PC-3 (cell line): ENCODE measurements at regions of chr15 and their contacts with region 1.

Region 1: DNA sequence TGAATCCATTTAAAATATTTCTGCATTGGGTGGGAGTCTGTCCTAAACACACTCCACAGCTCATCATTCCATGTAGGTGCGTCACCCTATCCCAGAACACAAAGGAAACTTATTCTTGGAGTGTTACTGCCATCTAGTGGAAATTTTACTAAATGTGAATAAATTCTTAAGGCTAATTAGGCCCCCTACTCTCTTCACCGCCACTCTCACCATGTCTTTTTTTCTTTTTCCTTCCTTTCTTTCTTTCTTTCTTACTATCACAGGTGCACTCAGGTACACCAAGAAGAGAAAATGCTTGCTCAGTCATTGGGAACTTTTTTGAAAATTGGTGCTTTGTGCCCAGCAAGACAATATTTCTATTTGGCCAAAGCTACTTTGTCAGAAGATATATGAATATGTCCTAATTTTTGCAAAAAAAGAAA is 26.4 kb upstream of the ATP8B4 start:
- DNase-seq: peak; percentile 90
- ATAC-seq: peak; percentile 89
- H3K4me3 ChIP-seq: no peak overlapping the region
- H3K27ac ChIP-seq: no peak overlapping the region
- H3K4me1 ChIP-seq: peaks cover 21% of the 10 kb centered on the region; the same call in 1 of the 2 replicates
- H3K27me3 ChIP-seq: no peaks in the 10 kb centered on the region
- CTCF ChIP-seq: peak; percentile 69

Region 2: GRCh38 chr15:48963524-48964113 is 1181.8 kb before region 1 on chr15 and contains the start of gene SHC4:
- CTCF ChIA-PET with region 1: no interaction called
- POLR2A ChIA-PET with region 1: no interaction called
- intact Hi-C with region 1: loop called (anchors 10 kb)
- DNase-seq: peak; percentile 75
- ATAC-seq: peak; percentile 48
- H3K4me3 ChIP-seq: peak within 1 kb of the TSS; percentile 81
- H3K27ac ChIP-seq: peak within 1 kb of the TSS; percentile 89
- H3K4me1 ChIP-seq: peaks cover 34% of the 10 kb centered on the region
- H3K27me3 ChIP-seq: no peaks in the 10 kb centered on the region
- CTCF ChIP-seq: peak; percentile 47
- total RNA-seq, gene SHC4: 2.4 and 4.3 TPM in 2 replicates

Region 3: GRCh38 chr15:49235446-49236124 is 909.9 kb before region 1 on chr15:
- CTCF ChIA-PET with region 1: no interaction called
- POLR2A ChIA-PET with region 1: no interaction called
- intact Hi-C with region 1: loop called (anchors 5 kb)
- DNase-seq: peak; percentile 60
- ATAC-seq: peak; percentile 88
- H3K4me3 ChIP-seq: no peak overlapping the region
- H3K27ac ChIP-seq: 0 out of 2 replicates have a peak overlapping the region, but pooled peaks have one; percentile 10
- H3K4me1 ChIP-seq: peaks cover 5% of the 10 kb centered on the region; the same call in 1 of the 2 replicates
- H3K27me3 ChIP-seq: no peaks in the 10 kb centered on the region
- CTCF ChIP-seq: peak; percentile 81

Region 4: DNA sequence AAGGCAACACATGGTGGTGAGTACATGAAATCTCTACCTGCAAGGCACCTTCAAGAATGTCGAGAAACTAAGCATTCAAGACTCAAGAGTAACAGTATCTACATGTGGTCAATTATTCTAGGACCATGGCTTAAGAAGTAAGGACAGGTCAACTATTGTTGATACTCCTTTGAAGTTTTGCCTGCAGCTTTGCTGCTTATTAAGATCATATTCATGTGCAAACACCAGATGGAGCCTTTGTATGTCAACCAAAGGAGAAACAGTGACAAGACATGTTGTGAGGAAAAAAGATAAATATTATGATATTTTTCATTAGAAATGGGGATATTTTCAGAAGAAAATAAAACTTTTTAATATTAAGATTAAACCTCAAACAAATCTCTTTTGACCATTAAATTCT is 774.7 kb before region 1 on chr15:
- CTCF ChIA-PET with region 1: no interaction called
- POLR2A ChIA-PET with region 1: no interaction called
- intact Hi-C with region 1: loop called (anchors 2 kb)
- DNase-seq: peak; percentile 52
- ATAC-seq: peak; percentile 27; the same call in 1 of the 2 replicates
- H3K4me3 ChIP-seq: no peak overlapping the region
- H3K27ac ChIP-seq: no peak overlapping the region
- H3K4me1 ChIP-seq: no peaks in the 10 kb centered on the region
- H3K27me3 ChIP-seq: no peaks in the 10 kb centered on the region
- CTCF ChIP-seq: peak; percentile 58

Region 5: DNA sequence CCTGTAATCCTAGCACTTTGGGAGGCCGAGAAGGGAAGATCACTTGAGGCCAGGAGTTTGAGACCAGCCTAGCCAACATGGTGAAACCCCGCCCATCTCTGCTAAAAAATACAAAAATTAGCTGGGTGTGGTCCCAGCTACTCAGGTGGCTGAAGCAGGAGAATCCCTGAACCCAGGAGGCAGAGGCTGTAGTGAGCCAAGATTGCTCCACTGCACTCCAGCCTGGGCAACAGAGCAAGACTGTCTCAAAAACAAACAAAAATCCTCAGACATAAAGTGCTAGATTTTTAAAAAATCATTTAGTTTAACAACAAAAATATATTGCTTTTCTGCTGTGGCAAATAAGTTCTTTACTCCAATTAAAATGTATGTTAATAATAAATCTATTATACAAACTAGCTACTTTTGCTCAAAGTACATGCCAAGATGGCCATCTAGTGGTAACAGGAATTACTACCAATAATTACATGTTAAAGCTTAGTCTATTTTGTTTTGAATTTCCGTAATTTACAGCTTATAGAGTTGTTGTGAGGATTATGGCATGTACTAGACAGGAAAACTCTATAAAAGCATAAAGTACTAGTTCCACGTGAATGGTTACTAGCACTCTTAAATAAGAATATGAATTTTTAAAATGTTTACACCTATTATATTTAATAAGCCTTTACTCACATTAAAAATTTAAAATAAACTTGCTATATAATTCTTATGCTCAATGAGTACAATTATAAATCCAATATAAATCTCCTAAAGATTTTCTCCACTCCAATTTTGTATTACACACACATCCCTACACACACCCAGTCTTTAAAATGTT is 170.6 kb after region 1 on chr15:
- CTCF ChIA-PET with region 1: interaction called, 23 read pairs
- POLR2A ChIA-PET with region 1: no interaction called
- intact Hi-C with region 1: loop called (anchors 1 kb)
- DNase-seq: peak; percentile 62
- ATAC-seq: peak; percentile 35; the same call in 1 of the 2 replicates
- H3K4me3 ChIP-seq: no peak overlapping the region
- H3K27ac ChIP-seq: no peak overlapping the region
- H3K4me1 ChIP-seq: no peaks in the 10 kb centered on the region
- H3K27me3 ChIP-seq: no peaks in the 10 kb centered on the region
- CTCF ChIP-seq: peak; percentile 68